ENCODE measurements at regions of chr13 and their contacts with region 1.

Region 1: DNA sequence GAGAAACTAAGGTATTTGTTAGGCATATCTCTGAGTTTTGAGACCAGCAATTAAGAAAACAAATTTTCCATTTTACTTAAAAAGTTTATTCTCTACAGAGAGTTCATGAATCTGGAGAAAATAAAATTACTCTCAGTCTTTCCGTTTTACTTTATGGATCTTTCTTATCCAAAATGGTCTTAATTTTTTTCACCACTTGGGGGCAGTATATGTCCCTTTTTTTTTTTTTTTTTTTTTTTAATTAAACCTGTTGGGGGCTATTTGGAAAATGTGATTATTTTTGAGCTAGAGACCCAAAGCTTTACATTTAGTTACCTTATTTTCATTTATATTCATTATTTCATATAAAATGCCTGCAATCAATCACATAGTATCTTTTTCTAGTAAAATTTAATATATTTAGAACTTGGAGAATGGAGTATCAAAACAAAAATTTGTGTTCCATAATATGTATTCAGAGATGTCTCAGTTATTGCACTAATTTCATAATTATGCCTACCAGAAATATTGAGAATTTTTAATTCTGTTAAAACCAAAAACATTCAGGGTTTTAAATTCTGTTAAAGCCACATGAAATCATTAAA is 27.1 kb downstream of the PIBF1 start:
- DNase-seq: no peak
- ATAC-seq: peak; percentile 26; the same call in 1 of the 3 replicates
- H3K4me3 ChIP-seq: no peak overlapping the region
- H3K27ac ChIP-seq: no peak overlapping the region
- H3K4me1 ChIP-seq: no peaks in the 10 kb centered on the region
- H3K27me3 ChIP-seq: no peaks in the 10 kb centered on the region
- CTCF ChIP-seq: peak in 2 of 3 experiments; percentile 32 to 48; a peak in 4 of 6 replicates
- EP300 ChIP-seq: no peak
- POLR2A ChIP-seq: no peak
- RAD21 ChIP-seq: peak; percentile 31; the same call in 1 of the 2 replicates

Region 2: GRCh38 chr13:72788831-72789230 is 20.2 kb before region 1 on chr13:
- CTCF ChIA-PET with region 1: interaction called, 19 read pairs
- POLR2A ChIA-PET with region 1: no interaction called
- RAD21 ChIA-PET with region 1: interaction called, 4 read pairs
- SMC1A ChIA-PET with region 1: interaction called, 5 read pairs
- in situ Hi-C with region 1: no loop called
- intact Hi-C with region 1: no loop called
- DNase-seq: no peak
- ATAC-seq: no peak
- H3K4me3 ChIP-seq: no peak overlapping the region
- H3K27ac ChIP-seq: no peak overlapping the region
- H3K4me1 ChIP-seq: no peaks in the 10 kb centered on the region
- H3K27me3 ChIP-seq: no peaks in the 10 kb centered on the region
- CTCF ChIP-seq: no peak
- EP300 ChIP-seq: no peak
- POLR2A ChIP-seq: no peak
- RAD21 ChIP-seq: no peak

Region 3: GRCh38 chr13:72820156-72820897 is 11.3 kb after region 1 on chr13:
- CTCF ChIA-PET with region 1: interaction called, 13 read pairs
- POLR2A ChIA-PET with region 1: no interaction called
- RAD21 ChIA-PET with region 1: no interaction called
- SMC1A ChIA-PET with region 1: interaction called, 4 read pairs
- in situ Hi-C with region 1: no loop called
- intact Hi-C with region 1: no loop called
- DNase-seq: no peak
- ATAC-seq: no peak
- H3K4me3 ChIP-seq: no peak overlapping the region
- H3K27ac ChIP-seq: no peak overlapping the region
- H3K4me1 ChIP-seq: no peaks in the 10 kb centered on the region
- H3K27me3 ChIP-seq: no peaks in the 10 kb centered on the region
- CTCF ChIP-seq: no peak
- EP300 ChIP-seq: no peak
- POLR2A ChIP-seq: no peak
- RAD21 ChIP-seq: no peak

Region 4: GRCh38 chr13:72890546-72890945 is 81.5 kb after region 1 on chr13:
- CTCF ChIA-PET with region 1: no interaction called
- POLR2A ChIA-PET with region 1: no interaction called
- RAD21 ChIA-PET with region 1: no interaction called
- SMC1A ChIA-PET with region 1: no interaction called
- in situ Hi-C with region 1: no loop called
- intact Hi-C with region 1: no loop called
- DNase-seq: no peak
- ATAC-seq: no peak
- H3K4me3 ChIP-seq: no peak overlapping the region
- H3K27ac ChIP-seq: no peak overlapping the region
- H3K4me1 ChIP-seq: no peaks in the 10 kb centered on the region
- H3K27me3 ChIP-seq: no peaks in the 10 kb centered on the region
- CTCF ChIP-seq: no peak
- EP300 ChIP-seq: no peak
- POLR2A ChIP-seq: no peak
- RAD21 ChIP-seq: no peak

Region 5: DNA sequence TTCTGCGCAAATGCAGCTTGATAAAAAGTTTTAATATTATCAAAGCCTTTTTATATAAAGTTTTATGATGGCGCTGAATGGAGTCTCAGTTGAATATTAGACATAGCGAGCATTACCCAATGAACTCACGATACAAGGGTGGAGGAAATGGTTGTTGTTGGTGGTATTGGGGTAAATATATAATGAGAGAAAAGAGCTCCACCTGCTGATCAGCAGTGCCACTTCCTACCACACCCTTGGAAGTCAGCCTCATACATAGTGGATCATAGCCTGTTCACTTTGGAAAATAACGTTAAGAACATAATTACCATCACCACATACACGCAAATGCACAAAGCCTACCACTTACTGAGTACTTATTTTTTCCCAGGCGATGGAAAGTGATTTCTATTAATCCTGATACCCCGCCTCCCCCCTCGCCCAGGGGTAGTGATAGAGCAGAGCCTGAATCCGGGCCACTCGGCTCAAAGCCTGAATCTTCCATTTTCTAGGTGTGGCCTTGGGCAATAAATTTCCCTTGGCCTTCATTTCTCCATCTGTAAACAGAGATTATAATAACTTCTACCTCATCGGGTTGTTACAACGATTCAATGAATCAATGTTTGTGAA is 608.1 kb after region 1 on chr13:
- CTCF ChIA-PET with region 1: interaction called, 3 read pairs
- POLR2A ChIA-PET with region 1: no interaction called
- RAD21 ChIA-PET with region 1: no interaction called
- SMC1A ChIA-PET with region 1: no interaction called
- in situ Hi-C with region 1: loop called (anchors 25 kb)
- intact Hi-C with region 1: no loop called
- DNase-seq: no peak
- ATAC-seq: peak; percentile 77
- H3K4me3 ChIP-seq: no peak overlapping the region
- H3K27ac ChIP-seq: no peak overlapping the region
- H3K4me1 ChIP-seq: no peaks in the 10 kb centered on the region
- H3K27me3 ChIP-seq: no peaks in the 10 kb centered on the region
- CTCF ChIP-seq: peak in 1 of 3 experiments; percentile 11; a peak in 2 of 6 replicates
- EP300 ChIP-seq: no peak
- POLR2A ChIP-seq: no peak
- RAD21 ChIP-seq: peak; percentile 18; the same call in 1 of the 2 replicates

Region 6: GRCh38 chr13:73715114-73715910 is 906.3 kb after region 1 on chr13:
- CTCF ChIA-PET with region 1: interaction called, 3 read pairs
- POLR2A ChIA-PET with region 1: no interaction called
- RAD21 ChIA-PET with region 1: no interaction called
- SMC1A ChIA-PET with region 1: interaction called, 3 read pairs
- in situ Hi-C with region 1: loop called (anchors 10 kb)
- intact Hi-C with region 1: no loop called
- DNase-seq: peak; percentile 31
- ATAC-seq: peak; percentile 94
- H3K4me3 ChIP-seq: no peak overlapping the region
- H3K27ac ChIP-seq: peak overlapping the region; percentile 66
- H3K4me1 ChIP-seq: peaks cover 10% of the 10 kb centered on the region
- H3K27me3 ChIP-seq: no peaks in the 10 kb centered on the region
- CTCF ChIP-seq: no peak
- EP300 ChIP-seq: 0 out of 4 replicates have a peak, but pooled peaks of 1 of the 2 experiments have one; percentile 16
- POLR2A ChIP-seq: no peak
- RAD21 ChIP-seq: no peak

Measured in GM12878 (cell line).